ENCODE measurements at regions of chr4 and their contacts with region 1.

Region 1: DNA sequence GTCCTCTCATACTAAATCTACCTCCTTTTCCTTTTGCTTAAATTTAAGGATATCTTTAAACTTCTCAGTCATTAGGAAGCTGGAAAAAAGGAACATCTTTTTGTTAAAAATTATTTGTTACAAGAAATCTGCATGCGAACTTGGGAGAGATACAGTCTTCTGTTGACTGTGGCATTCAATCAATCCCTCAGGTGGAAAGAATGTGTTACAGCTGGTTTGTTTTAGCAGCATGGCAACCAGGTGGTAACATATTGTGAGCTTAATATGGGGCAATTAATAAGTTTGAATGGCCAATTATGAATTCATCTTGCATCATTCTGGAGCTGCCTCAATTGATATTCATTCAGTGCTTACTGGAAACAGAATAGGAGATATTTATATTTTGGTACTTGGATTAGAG is 135.0 kb downstream of the GC start:
- DNase-seq: no peak

Region 2: DNA sequence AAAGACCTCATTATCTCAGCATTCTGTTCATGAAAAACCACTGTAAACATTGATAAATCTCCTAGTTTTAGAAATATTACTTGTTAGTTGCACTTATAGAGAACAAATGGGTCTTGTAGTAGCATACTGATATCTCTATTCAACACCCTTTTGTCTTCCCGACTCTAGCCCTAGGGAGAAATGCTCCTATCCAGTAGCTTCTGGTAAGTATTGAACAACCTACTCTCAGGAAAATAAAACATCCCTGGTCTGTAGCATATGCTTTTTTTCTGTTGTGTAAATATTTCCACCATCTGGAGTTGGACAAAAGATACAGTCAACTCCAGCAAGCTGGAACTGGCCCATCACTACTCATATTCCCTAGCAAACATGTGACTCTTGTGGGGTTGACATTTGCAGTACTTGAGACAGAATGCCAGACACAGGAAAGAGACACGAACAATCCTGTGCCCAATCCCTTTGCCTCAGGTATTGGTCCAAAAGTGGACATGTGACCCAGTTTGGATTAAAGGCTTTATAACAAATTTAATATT is 53.3 kb before region 1 on chr4:
- intact Hi-C with region 1: loop called in 1 of 2 experiments (anchors 2 kb)
- DNase-seq: no peak